SK-N-SH (cell line): ENCODE measurements at regions of chrX and their contacts with region 1.

Region 1: GRCh38 chrX:128816919-128817318 is 706.4 kb downstream of the SMARCA1 start:
- DNase-seq: peak; percentile 15
- H3K4me3 ChIP-seq: no peak overlapping the region; a peak in 1 of 4 replicates
- H3K27ac ChIP-seq: no peak overlapping the region
- H3K4me1 ChIP-seq: no peaks in the 10 kb centered on the region
- H3K27me3 ChIP-seq: no peaks in the 10 kb centered on the region
- CTCF ChIP-seq: peak; percentile 53
- EP300 ChIP-seq: no peak
- RAD21 ChIP-seq: peak; percentile 23; the same call in 1 of the 2 replicates

Region 2: GRCh38 chrX:128891554-128891953 is 74.6 kb after region 1 on chrX:
- CTCF ChIA-PET with region 1: no interaction called
- POLR2A ChIA-PET with region 1: no interaction called
- DNase-seq: no peak
- H3K4me3 ChIP-seq: no peak overlapping the region
- H3K27ac ChIP-seq: no peak overlapping the region
- H3K4me1 ChIP-seq: no peaks in the 10 kb centered on the region
- H3K27me3 ChIP-seq: no peaks in the 10 kb centered on the region
- CTCF ChIP-seq: no peak
- EP300 ChIP-seq: no peak
- RAD21 ChIP-seq: no peak

Region 3: GRCh38 chrX:128975745-128976144 is 158.8 kb after region 1 on chrX:
- CTCF ChIA-PET with region 1: interaction called, 27 read pairs
- POLR2A ChIA-PET with region 1: no interaction called
- DNase-seq: peak; percentile 41
- H3K4me3 ChIP-seq: no peak overlapping the region; a peak in 1 of 4 replicates
- H3K27ac ChIP-seq: no peak overlapping the region
- H3K4me1 ChIP-seq: no peaks in the 10 kb centered on the region
- H3K27me3 ChIP-seq: no peaks in the 10 kb centered on the region
- CTCF ChIP-seq: peak; percentile 56
- EP300 ChIP-seq: no peak
- RAD21 ChIP-seq: peak; percentile 76

Region 4: DNA sequence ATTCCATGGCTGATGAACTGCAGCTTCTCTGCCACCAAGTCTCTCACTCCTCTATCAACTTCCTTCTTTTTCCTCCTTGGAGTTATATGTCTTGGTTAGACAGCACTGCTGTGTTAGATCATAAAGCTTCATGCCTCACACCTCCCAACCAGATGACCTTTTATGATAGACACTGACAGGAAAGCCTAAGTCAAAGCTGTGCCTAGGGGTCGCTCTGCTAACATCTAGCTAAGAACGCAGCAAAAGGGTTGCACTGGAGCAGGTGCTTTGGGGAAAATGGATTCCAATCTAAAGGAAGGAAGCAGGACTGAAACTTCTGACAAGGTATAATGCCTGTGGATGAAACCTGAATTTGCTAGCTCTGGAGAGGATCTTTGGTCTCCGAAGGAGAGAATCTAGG is 196.7 kb after region 1 on chrX:
- CTCF ChIA-PET with region 1: no interaction called
- POLR2A ChIA-PET with region 1: no interaction called
- DNase-seq: no peak
- H3K4me3 ChIP-seq: no peak overlapping the region
- H3K27ac ChIP-seq: no peak overlapping the region
- H3K4me1 ChIP-seq: no peaks in the 10 kb centered on the region
- H3K27me3 ChIP-seq: no peaks in the 10 kb centered on the region
- CTCF ChIP-seq: no peak
- EP300 ChIP-seq: no peak
- RAD21 ChIP-seq: no peak